H1 (cell line): ENCODE measurements at regions of chr11 and their contacts with region 1.

Region 1: DNA sequence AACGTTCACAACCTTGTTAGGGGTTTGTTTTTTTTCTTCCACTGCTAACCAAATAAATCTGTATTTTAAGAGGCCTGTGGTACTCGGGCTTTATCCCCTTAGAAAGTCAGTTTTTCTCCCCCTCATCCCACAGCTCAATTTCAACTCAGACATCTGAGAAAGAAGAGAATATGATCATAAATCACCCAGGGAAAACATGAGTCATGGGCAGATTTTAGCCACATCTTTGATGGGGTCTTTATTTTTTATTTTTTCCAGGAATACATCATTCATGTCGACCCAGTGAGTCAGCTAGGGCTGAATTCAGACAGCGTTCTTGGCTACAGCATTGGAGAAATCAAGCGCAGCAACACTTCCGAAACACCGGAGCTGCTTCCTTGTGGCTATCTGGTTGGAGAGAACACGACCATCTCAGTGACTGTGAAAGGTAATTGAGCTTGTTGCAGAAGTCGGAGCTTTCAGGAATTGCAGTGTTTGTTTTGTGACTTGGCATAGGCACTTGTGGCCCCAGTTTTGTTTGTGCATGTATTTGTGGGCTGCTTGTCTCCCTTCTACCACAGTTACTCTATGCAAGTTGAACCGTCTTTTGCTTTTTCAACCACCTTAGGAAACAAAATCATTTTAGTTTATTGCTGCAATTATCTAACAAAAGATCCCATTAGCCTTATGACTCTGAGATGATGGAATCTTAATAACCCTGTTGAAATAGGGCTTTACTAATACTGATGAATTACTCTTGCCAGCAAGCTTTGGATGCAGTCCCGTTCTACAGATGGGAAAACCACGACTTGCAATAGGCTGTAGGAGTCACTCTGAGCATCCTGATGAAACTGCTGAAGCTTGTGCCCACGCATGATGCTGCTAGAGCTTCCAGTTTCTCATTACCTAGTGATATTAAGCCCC is 62.7 kb downstream of the DBX1 start:
- DNase-seq: no peak
- H3K4me3 ChIP-seq: no peak overlapping the region
- H3K27ac ChIP-seq: no peak overlapping the region
- H3K4me1 ChIP-seq: no peaks in the 10 kb centered on the region
- H3K27me3 ChIP-seq: no peaks in the 10 kb centered on the region; a peak in 1 of 7 replicates
- CTCF ChIP-seq: no peak
- EP300 ChIP-seq: no peak
- POLR2A ChIP-seq: no peak
- RAD21 ChIP-seq: no peak

Region 2: GRCh38 chr11:20110908-20111669 is 13.5 kb after region 1 on chr11:
- CTCF ChIA-PET with region 1: interaction called, 24 read pairs
- POLR2A ChIA-PET with region 1: no interaction called
- DNase-seq: peak in 1 of 2 experiments; percentile 76
- H3K4me3 ChIP-seq: no peak overlapping the region
- H3K27ac ChIP-seq: no peak overlapping the region; the same call in 1 of the 2 replicates
- H3K4me1 ChIP-seq: no peaks in the 10 kb centered on the region
- H3K27me3 ChIP-seq: no peaks in the 10 kb centered on the region
- CTCF ChIP-seq: peak; percentile 85 to 99 (median 94)
- EP300 ChIP-seq: no peak
- POLR2A ChIP-seq: no peak
- RAD21 ChIP-seq: peak; percentile 83 to 88